Activated naive CD4-positive, alpha-beta T cell treated with anti-CD3 and anti-CD28 coated beads for 36 hours (primary cell): ENCODE measurements at regions of chr10 and their contacts with region 1.

Region 1: GRCh38 chr10:119305860-119306513 is 98.6 kb downstream of the GRK5 start:
- DNase-seq: peak; percentile 97
- H3K4me3 Mint-ChIP-seq: peak overlapping the region; percentile 68
- H3K27ac Mint-ChIP-seq: peak overlapping the region; percentile 99
- H3K4me1 Mint-ChIP-seq: peaks cover 74% of the 10 kb centered on the region
- H3K27me3 Mint-ChIP-seq: no peaks in the 10 kb centered on the region

Region 2: GRCh38 chr10:118321724-118322575 is 984.0 kb before region 1 on chr10:
- CTCF ChIA-PET with region 1: no interaction called
- intact Hi-C with region 1: no loop called
- DNase-seq: no peak
- H3K4me3 Mint-ChIP-seq: no peak overlapping the region
- H3K27ac Mint-ChIP-seq: no peak overlapping the region
- H3K4me1 Mint-ChIP-seq: no peaks in the 10 kb centered on the region
- H3K27me3 Mint-ChIP-seq: no peaks in the 10 kb centered on the region

Region 3: DNA sequence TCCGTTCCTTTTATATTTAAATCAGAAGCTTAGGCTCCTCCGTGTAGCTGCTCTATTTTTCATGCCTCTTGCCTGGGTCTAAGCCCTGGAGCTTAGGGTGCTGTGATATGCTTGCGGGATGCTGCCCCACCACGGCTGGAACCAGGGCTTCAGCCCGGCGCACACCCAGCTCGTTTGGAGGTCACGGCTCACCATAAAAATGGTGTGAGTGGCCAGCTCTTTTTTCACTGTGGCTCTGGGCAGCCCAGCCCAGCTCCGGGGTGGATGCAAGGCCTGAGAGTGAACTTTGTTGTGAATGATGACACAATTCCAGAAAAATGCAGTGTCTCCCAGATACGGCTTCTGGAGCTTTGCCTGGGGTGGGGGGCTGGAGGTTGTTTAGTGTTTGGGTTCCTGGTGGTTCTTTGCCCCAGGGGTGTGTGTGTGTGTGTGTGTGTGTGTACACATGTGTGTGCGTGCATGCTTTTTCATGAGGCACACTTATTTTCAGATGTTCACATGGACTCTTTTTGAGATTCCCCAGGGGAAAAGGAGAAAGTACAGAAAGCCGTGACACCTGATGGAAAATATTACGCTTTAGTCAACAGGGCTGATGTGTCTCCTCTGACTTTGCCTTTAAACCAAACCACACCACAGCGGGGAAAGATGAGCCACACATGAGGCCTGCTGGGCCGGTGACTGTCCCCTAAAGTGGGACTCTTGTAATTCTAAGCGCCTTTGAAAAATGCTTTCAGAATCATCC is 52.4 kb before region 1 on chr10:
- CTCF ChIA-PET with region 1: interaction called, 5 read pairs
- intact Hi-C with region 1: loop called (anchors 1 kb)
- DNase-seq: peak; percentile 82
- H3K4me3 Mint-ChIP-seq: no peak overlapping the region
- H3K27ac Mint-ChIP-seq: peak overlapping the region; percentile 88
- H3K4me1 Mint-ChIP-seq: peaks cover 55% of the 10 kb centered on the region
- H3K27me3 Mint-ChIP-seq: no peaks in the 10 kb centered on the region

Region 4: DNA sequence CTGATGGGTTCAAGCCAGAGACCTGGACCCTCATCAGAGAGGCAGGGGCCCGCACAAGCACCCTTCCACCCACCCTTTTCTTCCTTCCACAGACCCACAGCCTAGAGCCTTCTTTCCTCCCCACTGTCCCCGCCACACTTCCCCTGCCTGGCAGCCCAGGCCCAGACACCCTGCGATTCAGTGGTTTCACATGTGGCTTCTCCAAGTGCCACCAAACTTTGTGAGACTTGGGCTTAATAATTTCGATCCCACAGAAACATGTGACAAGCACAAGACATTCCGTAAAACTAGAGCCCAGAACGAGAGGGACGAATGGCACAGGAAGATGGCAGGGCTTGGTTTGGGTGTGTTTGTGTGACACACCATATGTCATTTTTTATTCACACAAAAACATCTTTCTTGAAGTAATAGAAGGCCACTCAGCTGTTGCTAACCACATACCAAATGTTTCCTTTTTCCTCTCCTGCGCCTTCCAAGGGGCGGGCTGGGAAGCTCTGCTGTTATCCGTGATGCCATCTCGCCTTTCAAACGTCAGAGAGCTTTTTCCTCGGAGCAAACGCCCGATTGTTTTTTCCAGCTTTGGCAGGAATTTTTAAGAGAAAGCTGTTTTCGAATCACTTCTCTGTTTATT is 64.2 kb after region 1 on chr10:
- CTCF ChIA-PET with region 1: interaction called, 3 read pairs
- intact Hi-C with region 1: loop called (anchors 1 kb)
- DNase-seq: peak; percentile 15
- H3K4me3 Mint-ChIP-seq: no peak overlapping the region
- H3K27ac Mint-ChIP-seq: no peak overlapping the region
- H3K4me1 Mint-ChIP-seq: peaks cover 33% of the 10 kb centered on the region
- H3K27me3 Mint-ChIP-seq: no peaks in the 10 kb centered on the region

Region 5: GRCh38 chr10:119502209-119502608 is 196.2 kb after region 1 on chr10:
- CTCF ChIA-PET with region 1: no interaction called
- intact Hi-C with region 1: loop called (anchors 1 kb)
- DNase-seq: peak; percentile 93
- H3K4me3 Mint-ChIP-seq: peak overlapping the region; percentile 47
- H3K27ac Mint-ChIP-seq: peak overlapping the region; percentile 99
- H3K4me1 Mint-ChIP-seq: peaks cover 98% of the 10 kb centered on the region
- H3K27me3 Mint-ChIP-seq: no peaks in the 10 kb centered on the region

Region 6: DNA sequence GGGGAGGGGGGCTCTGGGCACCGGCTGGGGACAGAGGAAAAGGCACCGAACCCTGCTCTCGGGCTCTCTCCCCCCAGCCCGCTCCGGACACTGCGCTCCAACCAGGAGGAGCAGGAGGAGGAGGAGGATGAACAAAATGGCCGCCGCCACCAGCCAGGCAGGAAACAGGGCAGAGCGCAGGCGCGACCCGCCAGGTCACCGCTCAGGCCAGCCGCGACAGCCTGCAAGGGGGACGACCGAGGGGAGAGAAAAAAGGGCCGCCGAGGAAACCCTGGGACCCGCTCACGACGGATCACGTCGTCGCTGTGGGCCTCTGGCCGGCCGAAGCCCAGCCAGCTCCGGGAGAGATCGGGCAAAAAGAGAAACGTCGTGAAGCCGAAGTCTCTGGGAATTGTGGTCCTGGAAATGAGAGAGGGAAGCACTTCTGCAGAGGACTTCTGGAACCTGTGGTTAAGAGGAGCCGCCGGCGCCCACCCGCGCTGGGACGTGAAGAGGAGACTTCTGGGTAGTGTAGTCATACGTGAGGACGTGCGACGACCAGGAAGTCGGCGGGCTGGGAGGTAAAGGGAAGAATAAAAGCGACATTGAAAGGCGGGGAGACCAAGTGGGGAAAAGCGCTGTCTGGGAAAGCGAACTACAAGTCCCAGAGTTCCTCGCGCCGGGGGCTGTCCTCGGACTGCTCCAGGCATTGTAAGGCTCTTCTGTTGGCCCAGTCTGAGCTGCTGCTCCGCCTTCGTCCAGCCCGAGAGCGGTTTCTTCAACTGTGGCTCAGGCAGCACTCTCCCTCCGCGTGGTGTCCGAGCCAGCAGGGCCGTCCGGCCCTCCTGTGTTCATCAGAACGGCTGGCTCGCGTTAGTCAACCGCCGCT is 290.8 kb after region 1 on chr10 and contains the start of gene TIAL1:
- CTCF ChIA-PET with region 1: no interaction called
- intact Hi-C with region 1: loop called (anchors 2 kb)
- DNase-seq: peak; percentile 98
- H3K4me3 Mint-ChIP-seq: peak within 1 kb of the TSS; percentile 93
- H3K27ac Mint-ChIP-seq: peak within 1 kb of the TSS; percentile 98
- H3K4me1 Mint-ChIP-seq: peaks cover 47% of the 10 kb centered on the region
- H3K27me3 Mint-ChIP-seq: no peaks in the 10 kb centered on the region
- total RNA-seq, gene TIAL1: 184 to 192 TPM

Region 7: DNA sequence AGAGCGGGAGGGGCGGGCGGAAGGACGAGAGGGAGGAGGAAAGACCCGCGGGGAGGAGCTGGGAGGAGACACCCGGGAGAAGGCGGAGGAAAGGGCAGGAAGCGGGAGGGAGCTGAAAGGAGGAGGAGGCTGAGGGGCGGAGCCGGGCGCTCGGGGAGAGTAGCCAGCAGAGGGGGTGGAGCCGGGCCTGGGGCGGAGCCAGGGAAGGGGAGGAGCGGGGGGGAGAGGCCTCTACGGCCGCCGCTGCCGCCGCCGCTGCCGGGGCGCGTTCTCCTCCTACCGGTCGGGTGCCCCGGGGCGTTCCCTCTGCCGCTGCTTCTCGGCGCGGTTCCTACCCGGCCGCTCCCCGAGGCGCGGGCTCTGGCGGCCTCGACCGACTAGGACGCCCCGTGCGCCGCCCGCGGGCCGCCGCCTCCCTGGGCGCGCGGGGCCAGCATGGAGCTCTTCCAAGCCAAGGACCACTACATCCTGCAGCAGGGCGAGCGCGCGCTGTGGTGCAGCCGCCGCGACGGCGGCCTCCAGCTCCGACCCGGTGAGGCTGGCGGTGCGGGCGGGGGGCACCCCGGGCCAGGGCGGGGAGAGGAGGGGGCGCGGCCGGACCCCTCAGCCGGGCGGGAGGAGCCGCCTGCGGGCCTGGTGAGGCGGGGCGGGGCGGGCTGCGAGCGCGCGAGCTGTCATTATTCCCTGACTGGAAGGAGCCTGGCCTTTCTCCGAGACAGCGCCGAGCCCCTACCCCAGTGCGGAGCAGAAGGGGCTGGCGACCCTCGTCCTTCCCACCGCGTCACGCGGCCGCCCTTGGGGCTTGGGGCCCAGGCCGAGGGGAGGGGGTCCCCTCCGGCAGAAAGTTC is 420.1 kb after region 1 on chr10 and contains the start of gene INPP5F:
- CTCF ChIA-PET with region 1: no interaction called
- intact Hi-C with region 1: loop called (anchors 5 kb)
- DNase-seq: peak; percentile 100
- H3K4me3 Mint-ChIP-seq: peak within 1 kb of the TSS; percentile 88
- H3K27ac Mint-ChIP-seq: peak within 1 kb of the TSS; percentile 78
- H3K4me1 Mint-ChIP-seq: peaks cover 41% of the 10 kb centered on the region
- H3K27me3 Mint-ChIP-seq: no peaks in the 10 kb centered on the region
- total RNA-seq, gene INPP5F: 10.5 to 10.9 TPM